T-cell (primary cell): ENCODE measurements at regions of chr6 and their contacts with region 1.

Region 1: GRCh38 chr6:125749173-125749864 is at the start of gene HEY2:
- DNase-seq: peak; percentile 41 to 88 (median 62)
- ATAC-seq: peak; percentile 74 to 84 (median 82)
- H3K4me3 ChIP-seq: peak within 1 kb of the TSS; percentile 60 to 86
- H3K4me3 Mint-ChIP-seq: peak within 1 kb of the TSS; percentile 85 to 92 (median 89)
- H3K27ac ChIP-seq: no peak within 1 kb of the TSS
- H3K27ac Mint-ChIP-seq: peak within 1 kb of the TSS; percentile 23 to 57
- H3K4me1 ChIP-seq: peaks cover 12 to 34% of the 10 kb centered on the region in 2 experiments
- H3K4me1 Mint-ChIP-seq: peaks cover 35 to 47% (median 37%) of the 10 kb centered on the region in 3 donors
- H3K27me3 ChIP-seq: peaks cover 6 to 34% of the 10 kb centered on the region in 2 experiments
- H3K27me3 Mint-ChIP-seq: peaks cover 28 to 61% of the 10 kb centered on the region in 2 donors
- total RNA-seq, gene HEY2: 0.16 to 0.32 (median 0.24) TPM in 4 of 5 donors, not detected in the other

Region 2: GRCh38 chr6:125314019-125314581 is 435.2 kb before region 1 on chr6:
- CTCF ChIA-PET with region 1: interaction called, 10 to 81 read pairs
- POLR2A ChIA-PET with region 1: interaction called in 1 of 2 experiments, 3 read pairs
- DNase-seq: peak in 16 of 35 experiments; percentile 6 to 61 (median 16)
- ATAC-seq: peak; percentile 46 to 67 (median 50)
- H3K4me3 ChIP-seq: no peak overlapping the region
- H3K4me3 Mint-ChIP-seq: no peak overlapping the region
- H3K27ac ChIP-seq: no peak overlapping the region
- H3K27ac Mint-ChIP-seq: no peak overlapping the region
- H3K4me1 ChIP-seq: no peaks in the 10 kb centered on the region
- H3K4me1 Mint-ChIP-seq: peaks cover 0 to 2% (median 2%) of the 10 kb centered on the region in 3 donors
- H3K27me3 ChIP-seq: peaks cover 0 to 7% of the 10 kb centered on the region in 2 experiments
- H3K27me3 Mint-ChIP-seq: peaks cover 14 to 16% of the 10 kb centered on the region in 2 donors

Region 3: DNA sequence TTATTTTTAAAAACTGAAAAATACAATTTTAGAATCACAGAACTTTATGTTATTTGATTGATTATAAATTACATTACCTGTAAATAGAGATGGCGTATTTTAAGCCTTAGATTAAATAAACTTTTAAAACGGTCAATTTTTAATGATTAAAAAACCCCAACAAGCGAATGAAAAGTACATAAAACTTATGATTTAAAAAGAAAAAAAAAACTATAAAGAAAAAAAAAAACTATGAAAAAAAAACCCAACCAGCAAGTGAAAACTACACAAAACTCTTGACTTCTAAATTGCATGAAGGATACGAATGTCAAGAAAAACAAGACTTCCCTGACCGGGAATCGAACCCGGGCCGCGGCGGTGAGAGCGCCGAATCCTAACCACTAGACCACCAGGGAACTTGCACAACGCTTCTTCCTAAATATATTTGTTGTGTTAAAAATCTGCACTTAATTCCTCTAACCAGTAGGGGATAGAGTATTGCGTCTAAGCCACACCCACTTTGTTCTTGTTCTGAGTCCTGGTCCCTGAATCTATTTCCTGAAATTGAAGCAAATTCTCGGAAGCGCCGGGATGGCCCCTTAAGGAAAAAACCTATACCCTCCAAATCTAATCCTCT is 30.7 kb after region 1 on chr6:
- CTCF ChIA-PET with region 1: interaction called, 8 to 12 read pairs
- POLR2A ChIA-PET with region 1: interaction called in 1 of 2 experiments, 7 read pairs
- DNase-seq: peak; percentile 68 to 92 (median 83)
- ATAC-seq: peak; percentile 77 to 81 (median 78)
- H3K4me3 ChIP-seq: peak overlapping the region; percentile 70 to 84
- H3K4me3 Mint-ChIP-seq: no peak overlapping the region
- H3K27ac ChIP-seq: peak overlapping the region; percentile 93
- H3K27ac Mint-ChIP-seq: no peak overlapping the region
- H3K4me1 ChIP-seq: peaks cover 3 to 10% of the 10 kb centered on the region in 2 experiments
- H3K4me1 Mint-ChIP-seq: peaks cover 15 to 25% (median 17%) of the 10 kb centered on the region in 3 donors
- H3K27me3 ChIP-seq: no peaks in the 10 kb centered on the region
- H3K27me3 Mint-ChIP-seq: peaks cover 0 to 2% of the 10 kb centered on the region in 2 donors

Region 4: GRCh38 chr6:127266178-127266891 is 1517.0 kb after region 1 on chr6 and contains the start of gene RNF146:
- CTCF ChIA-PET with region 1: interaction called in 1 of 2 experiments, 7 read pairs
- POLR2A ChIA-PET with region 1: interaction called in 1 of 2 experiments, 10 read pairs
- DNase-seq: peak; percentile 41 to 81 (median 63)
- ATAC-seq: peak; percentile 83 to 86 (median 84)
- H3K4me3 ChIP-seq: peak within 1 kb of the TSS; percentile 95 to 96
- H3K4me3 Mint-ChIP-seq: peak within 1 kb of the TSS; percentile 92 to 100 (median 93)
- H3K27ac ChIP-seq: peak within 1 kb of the TSS; percentile 97
- H3K27ac Mint-ChIP-seq: peak within 1 kb of the TSS; percentile 99 to 100
- H3K4me1 ChIP-seq: peaks cover 0 to 16% of the 10 kb centered on the region in 2 experiments
- H3K4me1 Mint-ChIP-seq: peaks cover 33 to 50% (median 41%) of the 10 kb centered on the region in 3 donors
- H3K27me3 ChIP-seq: no peaks in the 10 kb centered on the region
- H3K27me3 Mint-ChIP-seq: no peaks in the 10 kb centered on the region
- total RNA-seq, gene RNF146: 15.6 to 32.2 (median 31.3) TPM